HEK293T (cell line): ENCODE measurements at regions of chr6 and their contacts with region 1.

Region 1: DNA sequence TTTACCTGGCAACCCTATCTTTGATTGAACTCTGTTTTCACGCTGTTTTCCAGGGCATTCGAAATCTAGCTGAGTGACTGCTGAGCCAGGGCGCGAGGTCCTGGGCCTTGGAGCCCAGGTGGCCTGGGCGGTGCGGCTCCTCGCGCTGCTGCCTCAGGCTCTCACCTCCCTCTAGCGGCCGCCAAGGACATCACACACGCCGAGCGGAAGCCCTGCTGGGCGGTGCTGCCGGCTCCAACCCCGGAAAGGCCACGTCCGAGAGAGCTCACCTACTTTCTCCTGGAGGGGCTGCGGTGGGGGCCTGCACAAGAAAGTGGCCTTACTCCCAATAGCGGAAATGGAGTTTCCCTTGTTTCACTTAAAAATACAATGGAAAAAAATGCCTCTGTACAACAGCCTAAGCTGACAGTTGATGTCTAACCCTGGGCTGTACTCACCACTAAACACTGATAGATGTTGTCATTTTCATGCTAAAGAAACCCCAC is 77.7 kb downstream of the ELOVL4 start:
- DNase-seq: peak; percentile 89

Region 2: DNA sequence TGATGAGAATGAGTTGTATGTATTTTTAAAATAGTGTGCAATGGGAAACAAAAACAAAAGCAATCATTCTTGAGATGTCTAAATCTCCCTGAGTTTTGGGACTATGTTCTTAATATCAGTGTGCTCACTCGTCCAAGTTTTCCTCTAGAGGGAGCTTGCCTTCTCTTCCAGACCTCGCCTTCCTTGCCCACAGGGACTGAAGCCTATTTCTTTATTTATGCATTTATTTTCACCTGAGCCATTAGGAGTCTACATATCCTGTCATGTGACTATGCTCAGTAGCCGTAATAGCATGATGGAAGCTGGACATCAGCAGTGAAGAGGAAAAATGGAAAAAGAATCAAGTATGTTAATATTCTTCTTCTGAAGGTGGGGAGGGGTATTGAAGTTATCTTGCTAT is 107.3 kb before region 1 on chr6:
- CTCF ChIA-PET with region 1: interaction called, 10 read pairs
- POLR2A ChIA-PET with region 1: interaction called, 3 read pairs
- DNase-seq: peak; percentile 23

Region 3: GRCh38 chr6:79777713-79778579 is 91.7 kb before region 1 on chr6:
- CTCF ChIA-PET with region 1: interaction called, 19 read pairs
- POLR2A ChIA-PET with region 1: no interaction called
- DNase-seq: peak; percentile 93

Region 4: GRCh38 chr6:81636930-81637568 is 1767.4 kb after region 1 on chr6:
- CTCF ChIA-PET with region 1: no interaction called
- POLR2A ChIA-PET with region 1: no interaction called
- DNase-seq: no peak